Vagina (tissue), 2 donors: ENCODE measurements at regions of chr2 and their contacts with region 1.

Region 1: DNA sequence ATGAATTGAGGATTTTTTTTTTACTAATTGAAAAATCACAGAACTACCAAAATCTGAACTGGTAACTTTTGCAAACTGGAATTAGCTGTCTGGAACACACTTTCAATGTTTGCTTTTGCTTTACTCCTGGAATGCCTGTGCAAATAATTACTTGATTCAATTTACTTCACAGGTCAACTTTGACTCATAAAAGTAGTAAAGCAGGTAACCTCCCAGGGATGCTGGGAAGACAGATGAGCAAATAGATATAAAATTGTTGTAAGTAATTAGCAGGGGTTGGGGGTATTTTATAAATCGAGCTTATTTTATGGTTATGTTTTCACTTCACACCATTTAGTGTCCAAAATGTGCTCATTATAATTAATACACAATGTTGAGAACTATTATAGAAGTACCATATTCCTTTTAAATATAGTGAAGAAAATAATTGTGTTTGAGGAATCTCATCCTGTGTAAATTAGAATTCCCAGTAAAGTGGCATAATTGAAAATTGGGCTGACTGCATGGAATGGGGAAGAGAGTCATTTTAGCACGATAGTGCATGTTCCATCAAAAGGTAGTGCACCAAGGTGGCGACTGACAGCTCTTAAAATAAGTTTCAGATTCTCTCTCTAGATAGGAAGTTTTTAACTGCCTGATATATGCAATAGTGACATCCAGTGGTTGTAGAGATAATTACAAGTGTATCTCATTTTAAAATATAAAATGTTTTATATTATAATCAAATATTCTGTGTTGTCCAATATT is 398.1 kb upstream of the HNRNPA3 start:
- DNase-seq: no peak
- H3K4me3 ChIP-seq: no peak overlapping the region
- H3K27ac ChIP-seq: no peak overlapping the region
- H3K4me1 ChIP-seq: peaks cover 5% of the 10 kb centered on the region
- H3K27me3 ChIP-seq: no peaks in the 10 kb centered on the region
- CTCF ChIP-seq: peak; percentile 17 to 55 (median 41)
- POLR2A ChIP-seq: no peak

Region 2: DNA sequence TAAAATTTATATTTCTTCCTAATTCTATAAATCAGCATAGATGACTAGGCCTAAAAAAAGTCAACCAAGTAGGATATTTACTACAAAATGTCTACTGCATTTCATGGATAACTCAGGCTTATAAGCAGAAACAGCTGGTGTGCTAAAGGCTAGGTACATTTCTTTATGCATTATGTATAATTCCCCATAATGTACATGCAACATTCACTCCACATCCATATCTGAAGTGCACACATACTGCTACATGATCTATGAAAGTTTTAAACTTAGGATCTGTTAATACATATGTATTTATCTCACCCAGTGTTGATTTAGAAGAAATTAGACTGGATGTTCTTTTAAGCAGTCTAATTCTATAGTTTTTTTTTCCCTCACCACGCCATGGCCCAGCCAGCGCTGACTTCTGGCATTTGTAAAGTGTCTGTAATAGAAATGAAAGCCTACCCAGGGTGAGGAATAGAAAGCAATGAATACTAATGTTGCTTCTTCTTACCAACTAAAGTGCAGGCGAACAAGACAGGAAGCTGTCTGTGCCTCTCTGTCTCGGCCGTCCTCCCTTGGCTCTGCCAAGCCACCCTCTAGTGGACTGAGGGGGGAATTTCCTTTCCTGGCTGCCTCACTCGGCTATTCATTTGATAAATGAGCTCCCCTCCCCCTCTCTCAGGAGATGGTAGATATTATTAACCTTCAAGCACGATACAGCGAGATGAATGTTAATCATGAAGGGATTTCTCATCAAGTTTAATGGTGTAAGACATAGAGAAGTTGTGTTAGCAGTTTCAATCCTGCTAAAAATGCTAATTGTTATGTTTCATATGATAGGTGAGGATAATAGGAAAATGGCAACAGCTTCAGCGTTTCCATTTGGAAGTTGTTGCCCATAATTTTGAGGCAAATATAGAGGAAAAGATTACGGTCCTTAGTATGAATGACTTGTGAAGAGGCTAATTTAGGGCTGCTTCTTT is 160.7 kb before region 1 on chr2:
- intact Hi-C with region 1: loop called (anchors 10 kb)
- DNase-seq: no peak
- H3K4me3 ChIP-seq: no peak overlapping the region
- H3K27ac ChIP-seq: no peak overlapping the region
- H3K4me1 ChIP-seq: no peaks in the 10 kb centered on the region
- H3K27me3 ChIP-seq: no peaks in the 10 kb centered on the region
- CTCF ChIP-seq: peak in 2 of 3 experiments; percentile 57 to 59
- POLR2A ChIP-seq: no peak

Region 3: DNA sequence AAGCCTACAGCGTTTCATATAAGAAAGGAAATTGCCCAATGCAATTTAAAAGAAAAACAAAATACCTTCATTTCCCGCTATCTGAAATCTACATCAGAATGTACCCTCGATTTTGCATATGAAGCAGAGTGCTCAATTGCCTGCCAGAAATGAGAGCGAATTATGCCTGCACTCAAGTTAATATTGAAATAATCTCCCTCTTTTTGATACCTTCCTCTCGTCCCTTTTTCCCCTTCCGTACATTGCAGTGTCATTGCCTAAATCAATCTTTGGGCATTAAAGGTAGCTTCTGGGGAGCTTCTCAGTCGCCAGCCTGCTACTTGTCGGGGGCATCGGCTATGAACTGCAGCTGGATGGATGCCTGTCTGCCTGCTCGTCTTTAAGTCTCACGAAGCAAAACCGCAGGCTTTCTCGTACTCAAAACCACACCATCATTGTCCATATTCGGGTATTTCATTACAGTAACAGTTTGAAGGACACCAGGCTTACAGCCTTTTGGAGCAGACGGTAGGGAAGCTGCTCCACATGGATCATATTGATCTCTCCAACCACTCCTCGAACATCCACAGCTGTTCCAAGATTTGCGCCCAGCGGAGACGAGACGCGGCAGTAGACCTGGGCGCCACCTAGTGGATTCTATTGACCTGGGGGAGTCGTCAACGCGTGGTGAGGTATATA is 334.1 kb after region 1 on chr2:
- intact Hi-C with region 1: loop called (anchors 10 kb)
- DNase-seq: no peak
- H3K4me3 ChIP-seq: peak overlapping the region; percentile 39 to 46
- H3K27ac ChIP-seq: peak overlapping the region; percentile 34
- H3K4me1 ChIP-seq: peaks cover 6% of the 10 kb centered on the region
- H3K27me3 ChIP-seq: no peaks in the 10 kb centered on the region
- CTCF ChIP-seq: peak; percentile 48 to 72 (median 57)
- POLR2A ChIP-seq: no peak